Heart left ventricle (tissue), 16 donors: ENCODE measurements at regions of chr9 and their contacts with region 1.

Region 1: DNA sequence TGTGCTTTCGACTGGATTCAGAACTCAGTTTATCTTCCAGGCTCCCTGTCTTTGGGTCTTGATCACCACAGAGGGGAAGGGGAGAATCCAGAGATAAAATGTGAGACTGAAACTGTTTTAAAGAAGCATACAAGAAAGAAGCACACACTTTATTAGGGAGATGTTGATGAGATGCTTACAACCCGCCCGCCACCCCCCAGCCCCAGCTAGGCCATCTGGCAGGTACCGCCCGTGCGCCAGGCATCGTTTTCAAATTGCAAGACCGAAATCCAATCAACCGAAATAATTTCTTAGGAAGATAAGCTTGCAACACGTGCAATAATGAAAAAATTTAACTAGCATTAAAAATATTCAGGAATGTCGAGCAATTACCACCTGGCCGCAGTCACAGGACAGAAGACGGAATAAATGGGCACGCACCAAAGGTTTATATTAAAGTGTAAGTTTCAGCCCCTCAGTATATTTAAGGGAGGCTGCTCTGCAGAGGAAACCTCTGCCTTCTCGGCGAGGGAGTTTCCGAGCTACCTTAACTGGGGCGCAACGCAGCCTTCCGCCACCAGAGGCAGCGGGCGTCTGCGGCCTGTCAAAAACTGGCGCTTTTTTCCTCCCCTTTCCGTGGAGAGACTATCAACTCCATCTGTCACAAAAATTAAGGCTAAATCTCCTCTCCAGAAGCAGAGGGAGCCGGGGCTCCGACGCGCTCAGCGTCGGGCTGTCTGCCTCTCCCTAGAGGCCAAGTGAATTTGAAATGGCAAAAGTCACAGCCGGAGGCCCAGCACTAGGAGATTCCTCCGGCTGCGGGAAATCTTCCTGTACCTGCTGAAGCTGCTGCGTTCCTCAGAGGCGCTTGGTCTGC is 996 bp upstream of the GAS1 start:
- DNase-seq: peak; percentile 76 to 88 (median 81)
- ATAC-seq: peak; percentile 65 to 84 (median 78)
- H3K4me3 ChIP-seq: peak overlapping the region; percentile 51 to 92 (median 80)
- H3K27ac ChIP-seq: peak overlapping the region; percentile 48 to 95 (median 92)
- H3K4me1 ChIP-seq: peaks cover 0 to 34% (median 6%) of the 10 kb centered on the region in 12 donors
- H3K27me3 ChIP-seq: peaks cover 0 to 28% (median 0%) of the 10 kb centered on the region in 9 donors
- CTCF ChIP-seq: peak; percentile 64 to 96 (median 84)
- POLR2A ChIP-seq: peak in 1 of 2 donors; percentile 29

Region 2: GRCh38 chr9:85978496-85978895 is 969.8 kb before region 1 on chr9:
- intact Hi-C with region 1: no loop called
- DNase-seq: no peak
- ATAC-seq: no peak
- H3K4me3 ChIP-seq: no peak overlapping the region
- H3K27ac ChIP-seq: no peak overlapping the region
- H3K4me1 ChIP-seq: peaks cover 0 to 21% (median 0%) of the 10 kb centered on the region in 12 donors
- H3K27me3 ChIP-seq: no peaks in the 10 kb centered on the region
- CTCF ChIP-seq: no peak
- POLR2A ChIP-seq: no peak

Region 3: DNA sequence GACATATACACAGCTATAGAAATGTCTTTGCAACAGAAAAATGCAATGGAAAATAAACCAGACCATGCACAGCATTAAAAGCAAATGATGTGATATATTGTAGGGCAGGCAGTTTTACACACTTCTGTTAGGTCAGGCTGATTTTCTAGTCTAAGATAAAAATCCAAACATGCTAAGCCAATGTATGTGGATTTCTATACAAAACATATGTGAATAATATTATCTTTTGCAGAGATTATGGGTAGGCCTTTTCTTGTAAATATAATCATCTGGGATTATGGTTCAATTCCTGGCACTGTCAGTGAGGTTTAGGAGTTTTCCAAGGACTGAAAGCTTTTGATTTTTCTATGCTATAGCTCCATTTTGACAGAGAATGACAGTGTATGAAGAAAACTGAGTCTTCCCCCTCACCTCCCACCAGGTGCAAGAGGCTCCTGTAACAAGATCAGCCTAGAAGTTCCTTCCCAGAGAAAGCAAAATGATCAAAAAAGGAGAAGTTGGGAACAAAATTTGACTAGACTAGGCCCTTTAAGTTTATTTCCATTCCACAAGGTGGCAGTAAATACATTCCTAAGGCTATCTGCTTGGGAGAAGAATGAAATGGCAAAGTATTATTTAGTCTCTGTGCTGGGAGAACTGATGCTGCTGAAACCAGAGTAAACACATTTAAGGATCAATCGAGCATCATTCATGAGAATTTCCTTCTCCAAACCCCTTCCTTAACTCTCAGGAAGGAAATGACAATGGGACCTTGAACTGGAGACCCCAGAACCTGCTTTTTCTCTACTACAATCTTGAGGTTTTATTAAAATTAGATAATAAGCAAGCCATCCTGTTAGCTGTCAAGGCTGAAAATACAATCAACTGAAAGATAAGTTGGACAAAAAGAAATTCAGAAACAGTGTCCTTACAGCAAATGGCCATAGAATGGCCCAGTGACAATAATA is 461.1 kb before region 1 on chr9:
- intact Hi-C with region 1: loop called in 8 of 10 experiments (anchors 5 to 10 kb)
- DNase-seq: no peak
- ATAC-seq: peak in 3 of 4 donors; percentile 67 to 75 (median 72)
- H3K4me3 ChIP-seq: no peak overlapping the region
- H3K27ac ChIP-seq: no peak overlapping the region
- H3K4me1 ChIP-seq: peaks cover 0 to 8% (median 0%) of the 10 kb centered on the region in 12 donors
- H3K27me3 ChIP-seq: no peaks in the 10 kb centered on the region
- CTCF ChIP-seq: peak; percentile 45 to 77 (median 67)
- POLR2A ChIP-seq: no peak

Region 4: GRCh38 chr9:86637515-86637914 is 310.8 kb before region 1 on chr9:
- intact Hi-C with region 1: loop called in 1 of 10 experiments (anchors 5 kb)
- DNase-seq: peak in 3 of 5 donors; percentile 22 to 40 (median 24)
- ATAC-seq: peak in 2 of 4 donors; percentile 43 to 57
- H3K4me3 ChIP-seq: no peak overlapping the region
- H3K27ac ChIP-seq: no peak overlapping the region
- H3K4me1 ChIP-seq: no peaks in the 10 kb centered on the region
- H3K27me3 ChIP-seq: peaks cover 0 to 12% (median 0%) of the 10 kb centered on the region in 9 donors
- CTCF ChIP-seq: peak; percentile 25 to 63 (median 38)
- POLR2A ChIP-seq: no peak

Region 5: GRCh38 chr9:86843206-86843605 is 105.1 kb before region 1 on chr9:
- intact Hi-C with region 1: loop called in 1 of 10 experiments (anchors 5 kb)
- DNase-seq: no peak
- ATAC-seq: no peak
- H3K4me3 ChIP-seq: no peak overlapping the region
- H3K27ac ChIP-seq: no peak overlapping the region
- H3K4me1 ChIP-seq: peaks cover 0 to 11% (median 0%) of the 10 kb centered on the region in 12 donors
- H3K27me3 ChIP-seq: no peaks in the 10 kb centered on the region
- CTCF ChIP-seq: no peak
- POLR2A ChIP-seq: no peak

Region 6: GRCh38 chr9:87119328-87119881 is 171.1 kb after region 1 on chr9:
- intact Hi-C with region 1: loop called in 1 of 10 experiments (anchors 5 kb)
- DNase-seq: peak in 4 of 5 donors; percentile 39 to 63 (median 48)
- ATAC-seq: peak; percentile 83 to 95 (median 89)
- H3K4me3 ChIP-seq: no peak overlapping the region
- H3K27ac ChIP-seq: peak overlapping the region in 6 of 12 donors; percentile 14 to 67 (median 32)
- H3K4me1 ChIP-seq: peaks cover 0 to 59% (median 21%) of the 10 kb centered on the region in 12 donors
- H3K27me3 ChIP-seq: no peaks in the 10 kb centered on the region
- CTCF ChIP-seq: no peak
- POLR2A ChIP-seq: no peak

Region 7: DNA sequence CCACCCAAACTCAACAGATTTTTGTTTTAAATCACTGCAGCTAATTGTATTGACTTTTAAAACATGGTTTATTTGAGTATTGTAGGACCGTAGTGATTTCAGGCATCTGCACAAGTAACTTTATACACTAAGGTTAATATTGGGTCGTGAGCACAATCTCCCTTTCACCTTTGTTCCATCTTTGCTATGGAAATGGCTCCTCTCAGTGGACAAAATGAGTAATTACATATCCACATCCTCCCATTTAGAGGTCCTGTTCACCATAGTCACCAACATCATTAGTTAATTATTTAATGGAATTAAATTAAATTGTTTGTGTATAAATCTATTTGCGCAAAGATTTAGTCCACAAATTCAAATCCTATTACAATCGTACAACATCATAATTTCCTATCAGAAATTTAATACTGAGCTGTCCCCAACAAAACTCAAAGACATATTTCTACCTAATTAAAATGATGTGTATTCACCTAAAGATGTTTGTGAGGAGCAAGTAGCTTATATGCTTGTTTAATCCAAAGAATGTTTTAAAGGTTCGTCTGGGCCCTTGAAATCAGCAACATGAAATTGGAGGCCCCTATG is 376.4 kb after region 1 on chr9:
- intact Hi-C with region 1: loop called in 7 of 10 experiments (anchors 2 to 10 kb)
- DNase-seq: no peak
- ATAC-seq: peak in 3 of 4 donors; percentile 70 to 85 (median 71)
- H3K4me3 ChIP-seq: no peak overlapping the region
- H3K27ac ChIP-seq: no peak overlapping the region
- H3K4me1 ChIP-seq: peaks cover 0 to 11% (median 0%) of the 10 kb centered on the region in 12 donors
- H3K27me3 ChIP-seq: peaks cover 0 to 3% (median 0%) of the 10 kb centered on the region in 9 donors
- CTCF ChIP-seq: peak; percentile 70 to 88 (median 82)
- POLR2A ChIP-seq: no peak